ENCODE measurements at regions of chr12 and their contacts with region 1.

Region 1: DNA sequence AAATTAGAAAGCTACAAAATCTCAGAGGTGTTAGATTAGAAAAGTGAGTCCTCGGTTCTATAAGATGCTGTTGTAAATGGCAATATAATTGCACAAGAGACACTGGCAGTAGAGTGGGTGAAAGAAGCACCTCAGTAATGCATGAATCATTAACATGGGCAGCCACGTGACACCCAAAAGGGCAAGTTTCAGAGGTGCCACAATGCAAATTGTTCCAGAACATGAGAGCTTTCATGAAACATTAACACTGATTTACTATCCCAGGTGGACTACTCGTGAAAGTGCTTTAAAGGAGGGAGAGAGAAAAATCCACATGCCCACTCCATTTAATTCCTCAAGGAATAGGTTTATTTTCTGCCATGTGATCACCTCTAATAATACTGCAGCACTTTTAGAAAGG is 108.4 kb downstream of the PTPRR start:
- DNase-seq: no peak

Region 2: DNA sequence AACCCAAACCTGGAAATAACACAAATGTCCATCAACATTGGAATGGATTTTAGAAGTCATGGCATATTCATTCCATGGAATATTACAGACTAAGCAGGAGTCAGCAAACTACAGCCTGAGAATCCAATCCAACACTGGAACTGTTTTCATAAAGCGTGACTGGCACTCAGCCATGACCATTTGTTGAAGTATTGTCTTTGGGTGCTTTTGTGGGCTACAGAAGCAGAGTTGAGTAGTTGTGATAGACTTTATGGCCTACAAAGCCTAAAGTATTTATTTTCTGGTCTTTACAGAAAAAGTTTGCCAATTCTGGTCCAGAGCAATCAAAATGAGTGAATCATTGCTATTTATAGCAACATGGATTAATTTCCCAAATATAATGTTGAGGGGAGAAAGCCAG is 1376.5 kb before region 1 on chr12:
- intact Hi-C with region 1: loop called in 1 of 2 experiments (anchors 10 kb)
- DNase-seq: no peak

Measured in posterior vena cava (tissue), 2 donors.